ENCODE measurements at regions of chr2 and their contacts with region 1.

Region 1: GRCh38 chr2:178241844-178242551 is 47.7 kb downstream of the OSBPL6 start:
- DNase-seq: peak; percentile 93
- H3K4me3 ChIP-seq: no peak overlapping the region
- H3K27ac ChIP-seq: peak overlapping the region; percentile 1
- H3K4me1 ChIP-seq: peaks cover 6% of the 10 kb centered on the region
- H3K27me3 ChIP-seq: no peaks in the 10 kb centered on the region
- CTCF ChIP-seq: no peak
- POLR2A ChIP-seq: no peak

Region 2: GRCh38 chr2:178193823-178194599 is 48.0 kb before region 1 on chr2 and contains the start of gene OSBPL6:
- CTCF ChIA-PET with region 1: no interaction called
- POLR2A ChIA-PET with region 1: no interaction called
- dilution Hi-C with region 1: no loop called
- intact Hi-C with region 1: loop called (anchors 1 kb)
- DNase-seq: peak; percentile 88
- H3K4me3 ChIP-seq: peak within 1 kb of the TSS; percentile 48 to 79 (median 73)
- H3K27ac ChIP-seq: no peak within 1 kb of the TSS
- H3K4me1 ChIP-seq: peaks cover 8% of the 10 kb centered on the region
- H3K27me3 ChIP-seq: peaks cover 11% of the 10 kb centered on the region in 2 experiments
- CTCF ChIP-seq: peak in 1 of 2 donors; percentile 22
- POLR2A ChIP-seq: peak; percentile 51
- total RNA-seq, gene OSBPL6: 2.3 TPM in 2 replicates

Region 3: GRCh38 chr2:178473931-178474330 is 231.9 kb after region 1 on chr2:
- CTCF ChIA-PET with region 1: no interaction called
- POLR2A ChIA-PET with region 1: no interaction called
- dilution Hi-C with region 1: no loop called
- intact Hi-C with region 1: no loop called
- DNase-seq: no peak
- H3K4me3 ChIP-seq: no peak overlapping the region
- H3K27ac ChIP-seq: no peak overlapping the region
- H3K4me1 ChIP-seq: peaks cover 8% of the 10 kb centered on the region
- H3K27me3 ChIP-seq: no peaks in the 10 kb centered on the region
- CTCF ChIP-seq: no peak
- POLR2A ChIP-seq: no peak